H1 (cell line): ENCODE measurements at regions of chr1 and their contacts with region 1.

Region 1: GRCh38 chr1:229258031-229258756 is 12.7 kb upstream of the RAB4A start:
- DNase-seq: peak in 1 of 2 experiments; percentile 75
- H3K4me3 ChIP-seq: no peak overlapping the region
- H3K27ac ChIP-seq: no peak overlapping the region
- H3K4me1 ChIP-seq: peaks cover 0 to 7% (median 2%) of the 10 kb centered on the region in 4 experiments; a peak in 4 of 7 replicates
- H3K27me3 ChIP-seq: no peaks in the 10 kb centered on the region
- CTCF ChIP-seq: peak; percentile 39 to 70 (median 66)
- EP300 ChIP-seq: no peak
- POLR2A ChIP-seq: no peak
- RAD21 ChIP-seq: peak; percentile 89 to 90

Region 2: DNA sequence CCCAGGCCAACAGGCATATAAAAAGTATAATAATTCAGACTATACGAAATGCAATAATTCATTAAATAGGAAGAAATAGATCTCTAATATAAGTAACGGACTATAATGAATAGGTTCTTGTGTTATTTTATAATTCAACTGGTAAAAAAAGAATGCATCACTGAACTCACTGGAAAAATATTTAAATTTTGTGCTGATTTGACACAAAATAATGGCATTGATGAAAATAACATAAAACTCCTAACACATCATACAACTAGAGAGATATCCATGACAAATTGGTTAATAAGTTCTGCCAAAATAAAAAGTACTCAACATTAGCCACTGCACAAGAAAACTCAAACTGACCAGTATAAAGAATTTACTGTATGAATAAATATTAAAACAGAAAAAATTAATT is 44.4 kb before region 1 on chr1:
- CTCF ChIA-PET with region 1: no interaction called
- POLR2A ChIA-PET with region 1: no interaction called
- DNase-seq: no peak
- H3K4me3 ChIP-seq: no peak overlapping the region
- H3K27ac ChIP-seq: no peak overlapping the region
- H3K4me1 ChIP-seq: no peaks in the 10 kb centered on the region
- H3K27me3 ChIP-seq: no peaks in the 10 kb centered on the region
- CTCF ChIP-seq: no peak
- EP300 ChIP-seq: no peak
- POLR2A ChIP-seq: no peak
- RAD21 ChIP-seq: no peak

Region 3: GRCh38 chr1:229227298-229227919 is 30.8 kb before region 1 on chr1:
- CTCF ChIA-PET with region 1: interaction called, 43 read pairs
- POLR2A ChIA-PET with region 1: interaction called, 3 read pairs
- DNase-seq: peak in 1 of 2 experiments; percentile 95
- H3K4me3 ChIP-seq: no peak overlapping the region
- H3K27ac ChIP-seq: no peak overlapping the region
- H3K4me1 ChIP-seq: peaks cover 22 to 43% (median 31%) of the 10 kb centered on the region in 4 experiments
- H3K27me3 ChIP-seq: no peaks in the 10 kb centered on the region
- CTCF ChIP-seq: peak; percentile 81 to 85 (median 83)
- EP300 ChIP-seq: no peak; a peak in 1 of 3 replicates
- POLR2A ChIP-seq: no peak
- RAD21 ChIP-seq: peak; percentile 94 to 96

Region 4: GRCh38 chr1:229323201-229323600 is 65.0 kb after region 1 on chr1:
- CTCF ChIA-PET with region 1: interaction called, 10 read pairs
- POLR2A ChIA-PET with region 1: no interaction called
- DNase-seq: no peak
- H3K4me3 ChIP-seq: no peak overlapping the region
- H3K27ac ChIP-seq: no peak overlapping the region
- H3K4me1 ChIP-seq: 0 out of 7 replicates have a peak, but pooled peaks cover 0 to 3% (median 0%) of the 10 kb centered on the region in 4 experiments
- H3K27me3 ChIP-seq: no peaks in the 10 kb centered on the region
- CTCF ChIP-seq: no peak
- EP300 ChIP-seq: no peak
- POLR2A ChIP-seq: no peak
- RAD21 ChIP-seq: no peak

Region 5: DNA sequence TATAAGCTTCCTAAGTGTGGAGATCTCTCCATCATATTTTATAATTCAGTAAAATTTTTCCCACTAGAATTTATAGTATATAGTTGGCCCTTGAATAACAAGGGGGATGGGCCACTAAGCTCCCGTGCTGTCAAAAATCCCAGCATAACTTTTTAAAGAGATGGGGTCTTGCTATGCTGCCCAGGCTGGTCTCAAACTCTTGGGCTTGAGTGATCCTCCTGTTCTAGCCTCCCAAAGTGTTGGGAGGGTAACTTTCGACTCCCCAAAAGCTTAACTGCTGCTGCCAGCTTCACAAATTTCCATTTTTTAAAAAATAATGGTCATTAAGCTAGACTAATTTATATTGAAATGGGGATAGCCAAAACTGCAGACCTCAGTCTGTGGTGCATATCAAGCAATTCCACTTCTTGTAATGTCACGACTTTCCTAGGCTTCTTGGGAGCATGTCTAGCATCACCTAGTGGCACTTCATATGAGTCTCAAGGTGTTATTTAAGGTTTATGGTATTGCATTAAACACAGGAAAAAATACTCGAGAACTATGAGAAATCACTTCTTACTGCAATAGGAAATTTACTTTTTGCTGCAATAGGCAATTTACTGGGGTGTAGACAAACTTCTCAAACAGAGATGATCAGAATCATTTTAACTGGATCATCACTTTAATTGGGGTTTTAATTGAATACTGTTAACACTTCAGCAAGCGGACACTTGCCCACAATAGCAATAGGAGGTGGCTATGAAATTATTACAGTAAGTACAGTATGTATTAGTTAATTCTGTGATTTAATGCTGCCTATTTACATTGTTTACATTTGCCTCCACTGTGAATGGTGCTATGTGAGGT is 195.0 kb after region 1 on chr1:
- CTCF ChIA-PET with region 1: interaction called, 12 read pairs
- POLR2A ChIA-PET with region 1: no interaction called
- DNase-seq: no peak
- H3K4me3 ChIP-seq: no peak overlapping the region
- H3K27ac ChIP-seq: no peak overlapping the region
- H3K4me1 ChIP-seq: no peaks in the 10 kb centered on the region
- H3K27me3 ChIP-seq: peaks cover 0 to 1% (median 0%) of the 10 kb centered on the region in 4 experiments; a peak in 1 of 7 replicates
- CTCF ChIP-seq: peak in 2 of 3 experiments; percentile 52 to 67; a peak in 3 of 4 replicates
- EP300 ChIP-seq: no peak
- POLR2A ChIP-seq: no peak
- RAD21 ChIP-seq: peak; percentile 78 to 81